ENCODE measurements at regions of chr3 and their contacts with region 1.

Region 1: GRCh38 chr3:26260139-26260538 is 362.4 kb upstream of the LRRC3B start:
- DNase-seq: no peak
- H3K4me3 ChIP-seq: no peak overlapping the region
- H3K27ac ChIP-seq: no peak overlapping the region
- H3K4me1 ChIP-seq: no peaks in the 10 kb centered on the region
- H3K27me3 ChIP-seq: no peaks in the 10 kb centered on the region
- CTCF ChIP-seq: no peak

Region 2: GRCh38 chr3:26015752-26016151 is 244.4 kb before region 1 on chr3:
- CTCF ChIA-PET with region 1: no interaction called
- POLR2A ChIA-PET with region 1: no interaction called
- intact Hi-C with region 1: loop called (anchors 10 kb)
- DNase-seq: no peak
- H3K4me3 ChIP-seq: no peak overlapping the region
- H3K27ac ChIP-seq: no peak overlapping the region
- H3K4me1 ChIP-seq: no peaks in the 10 kb centered on the region
- H3K27me3 ChIP-seq: no peaks in the 10 kb centered on the region
- CTCF ChIP-seq: no peak

Measured in A673 (cell line).